ENCODE measurements at regions of chr14 and their contacts with region 1.

Region 1: DNA sequence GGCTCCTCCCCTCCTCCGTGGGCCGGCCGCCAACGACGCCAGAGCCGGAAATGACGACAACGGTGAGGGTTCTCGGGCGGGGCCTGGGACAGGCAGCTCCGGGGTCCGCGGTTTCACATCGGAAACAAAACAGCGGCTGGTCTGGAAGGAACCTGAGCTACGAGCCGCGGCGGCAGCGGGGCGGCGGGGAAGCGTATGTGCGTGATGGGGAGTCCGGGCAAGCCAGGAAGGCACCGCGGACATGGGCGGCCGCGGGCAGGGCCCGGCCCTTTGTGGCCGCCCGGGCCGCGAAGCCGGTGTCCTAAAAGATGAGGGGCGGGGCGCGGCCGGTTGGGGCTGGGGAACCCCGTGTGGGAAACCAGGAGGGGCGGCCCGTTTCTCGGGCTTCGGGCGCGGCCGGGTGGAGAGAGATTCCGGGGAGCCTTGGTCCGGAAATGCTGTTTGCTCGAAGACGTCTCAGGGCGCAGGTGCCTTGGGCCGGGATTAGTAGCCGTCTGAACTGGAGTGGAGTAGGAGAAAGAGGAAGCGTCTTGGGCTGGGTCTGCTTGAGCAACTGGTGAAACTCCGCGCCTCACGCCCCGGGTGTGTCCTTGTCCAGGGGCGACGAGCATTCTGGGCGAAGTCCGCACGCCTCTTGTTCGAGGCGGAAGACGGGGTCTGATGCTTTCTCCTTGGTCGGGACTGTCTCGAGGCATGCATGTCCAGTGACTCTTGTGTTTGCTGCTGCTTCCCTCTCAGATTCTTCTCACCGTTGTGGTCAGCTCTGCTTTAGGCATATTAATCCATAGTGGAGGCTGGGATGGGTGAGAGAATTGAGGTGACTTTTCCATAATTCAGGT is at the start of gene PSEN1:
- DNase-seq: peak; percentile 100
- H3K4me3 Mint-ChIP-seq: peak within 1 kb of the TSS; percentile 93
- H3K27ac Mint-ChIP-seq: peak within 1 kb of the TSS; percentile 99
- H3K4me1 Mint-ChIP-seq: peaks cover 27% of the 10 kb centered on the region
- H3K27me3 Mint-ChIP-seq: no peaks in the 10 kb centered on the region
- total RNA-seq, gene PSEN1: 34.1 and 39.1 TPM in 2 replicates

Region 2: DNA sequence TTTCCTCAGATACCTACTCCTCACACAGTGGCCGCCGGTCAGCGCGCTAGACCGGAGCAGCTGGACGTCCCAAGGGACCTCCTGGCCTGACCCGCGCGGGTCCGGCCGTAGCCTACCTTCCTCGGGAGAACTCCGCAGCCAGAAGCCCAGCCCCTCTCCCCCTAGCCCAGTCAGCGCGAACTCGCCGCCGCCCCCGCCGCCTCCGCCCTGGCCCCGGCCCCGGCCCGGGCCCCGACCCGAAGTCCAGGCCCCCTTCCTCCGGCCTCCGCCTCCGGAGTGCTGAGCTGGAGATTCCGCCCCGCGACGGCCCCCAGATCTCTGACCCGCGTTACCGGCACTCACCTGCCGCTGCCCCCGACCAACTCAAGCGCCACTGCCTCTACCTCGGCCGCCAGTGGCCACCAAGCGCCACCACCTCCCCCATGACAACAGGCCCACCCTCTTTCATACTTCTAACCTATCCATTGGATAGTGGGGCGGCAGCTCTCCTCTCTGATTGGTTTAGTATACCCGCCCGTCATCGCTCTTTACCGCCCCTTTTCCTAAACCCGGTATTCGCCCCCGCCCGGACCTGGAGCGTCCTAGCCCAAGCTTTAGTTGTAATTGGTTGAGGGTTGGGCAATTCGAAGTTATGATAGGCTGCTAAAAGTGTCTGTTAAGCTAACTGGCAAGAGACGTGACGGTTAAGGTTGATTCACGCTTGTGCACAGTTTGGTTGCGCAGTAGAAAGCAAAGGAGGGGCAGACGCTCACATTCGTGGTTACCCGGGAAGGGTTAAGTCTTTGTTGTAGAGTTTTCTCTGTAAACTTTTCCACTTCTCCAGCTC is 321.8 kb after region 1 on chr14 and contains the start of gene NUMB:
- intact Hi-C with region 1: loop called (anchors 2 kb)
- DNase-seq: peak; percentile 99
- H3K4me3 Mint-ChIP-seq: peak within 1 kb of the TSS; percentile 98
- H3K27ac Mint-ChIP-seq: peak within 1 kb of the TSS; percentile 98
- H3K4me1 Mint-ChIP-seq: peaks cover 47% of the 10 kb centered on the region
- H3K27me3 Mint-ChIP-seq: no peaks in the 10 kb centered on the region
- total RNA-seq, gene NUMB: 48.1 and 54.8 TPM in 2 replicates